Activated CD4-positive, alpha-beta memory T cell treated with anti-CD3 and anti-CD28 coated beads for 36 hours (primary cell): ENCODE measurements at regions of chr9 and their contacts with region 1.

Region 1: DNA sequence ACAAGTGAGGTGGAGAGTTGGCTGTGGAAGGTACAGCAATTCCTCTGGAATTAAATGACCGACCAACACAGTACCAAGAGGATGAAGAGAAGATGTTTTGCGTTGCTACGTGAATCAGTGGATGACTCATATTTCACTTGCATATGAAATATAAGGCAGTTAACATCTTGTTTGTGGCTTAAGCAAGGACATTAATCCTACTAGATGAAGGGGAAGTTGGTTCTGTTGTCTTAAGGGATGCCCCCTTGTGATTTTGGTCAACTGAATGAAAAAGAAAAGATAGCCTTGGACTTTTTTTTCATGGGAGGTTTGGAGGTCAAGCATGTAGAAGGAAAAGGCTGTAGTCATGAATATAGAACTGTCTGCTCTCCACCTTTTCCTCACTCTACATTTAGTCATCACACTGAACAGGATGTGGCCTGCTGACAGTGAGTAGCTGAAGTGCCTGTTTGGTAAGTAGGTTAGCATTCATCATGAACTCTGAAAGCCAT is 33.9 kb downstream of the VLDLR start:
- DNase-seq: peak; percentile 56
- H3K4me3 Mint-ChIP-seq: no peak overlapping the region
- H3K27ac Mint-ChIP-seq: peak overlapping the region; percentile 80
- H3K4me1 Mint-ChIP-seq: peaks cover 23% of the 10 kb centered on the region
- H3K27me3 Mint-ChIP-seq: no peaks in the 10 kb centered on the region

Region 2: GRCh38 chr9:2570615-2571479 is 84.6 kb before region 1 on chr9:
- CTCF ChIA-PET with region 1: no interaction called
- POLR2A ChIA-PET with region 1: no interaction called
- intact Hi-C with region 1: loop called (anchors 1 kb)
- DNase-seq: peak; percentile 63
- H3K4me3 Mint-ChIP-seq: no peak overlapping the region
- H3K27ac Mint-ChIP-seq: no peak overlapping the region
- H3K4me1 Mint-ChIP-seq: no peaks in the 10 kb centered on the region
- H3K27me3 Mint-ChIP-seq: peaks cover 8% of the 10 kb centered on the region

Region 3: GRCh38 chr9:2608276-2608675 is 47.2 kb before region 1 on chr9:
- CTCF ChIA-PET with region 1: no interaction called
- POLR2A ChIA-PET with region 1: no interaction called
- intact Hi-C with region 1: loop called (anchors 5 kb)
- DNase-seq: no peak
- H3K4me3 Mint-ChIP-seq: no peak overlapping the region
- H3K27ac Mint-ChIP-seq: no peak overlapping the region
- H3K4me1 Mint-ChIP-seq: no peaks in the 10 kb centered on the region
- H3K27me3 Mint-ChIP-seq: peaks cover 15% of the 10 kb centered on the region

Region 4: DNA sequence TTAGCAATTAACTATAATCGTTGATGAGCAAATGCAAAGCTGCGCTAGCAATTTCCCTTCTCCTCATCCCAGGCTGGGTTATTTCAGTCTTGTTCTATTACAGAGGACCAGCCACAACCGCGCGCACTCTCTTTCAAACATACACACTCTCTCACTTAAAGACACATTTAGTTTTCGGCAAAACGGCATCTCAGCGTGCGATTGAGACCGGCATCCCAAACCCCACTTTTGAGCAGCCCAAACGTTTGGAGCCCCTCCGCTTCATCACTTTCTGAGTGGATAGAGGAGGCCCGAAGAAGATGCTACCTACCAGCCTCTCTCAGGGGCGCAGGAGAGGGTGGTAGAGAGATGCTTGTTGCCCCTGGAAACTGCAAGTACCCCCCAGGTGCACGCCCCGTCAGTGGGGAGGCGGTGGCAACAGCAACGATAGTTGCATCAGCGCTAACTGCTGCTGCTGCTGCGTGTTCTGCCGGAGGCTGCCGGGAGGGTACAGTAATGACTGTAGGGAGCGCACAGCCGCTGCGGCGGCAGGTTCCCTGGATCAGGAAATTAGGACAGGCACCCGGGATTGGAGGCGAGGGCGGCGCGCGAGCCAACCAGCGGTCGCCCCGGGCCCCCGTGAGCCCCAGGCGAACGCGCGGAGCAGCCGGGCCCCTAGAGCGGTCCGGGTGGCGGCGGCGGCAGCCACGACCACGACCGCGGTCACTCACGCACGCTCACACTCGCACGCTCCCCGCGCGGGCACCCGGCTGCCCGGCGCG is 34.4 kb before region 1 on chr9:
- CTCF ChIA-PET with region 1: no interaction called
- POLR2A ChIA-PET with region 1: no interaction called
- intact Hi-C with region 1: loop called (anchors 1 kb)
- DNase-seq: peak; percentile 86
- H3K4me3 Mint-ChIP-seq: peak overlapping the region; percentile 75
- H3K27ac Mint-ChIP-seq: peak overlapping the region; percentile 28
- H3K4me1 Mint-ChIP-seq: peaks cover 14% of the 10 kb centered on the region
- H3K27me3 Mint-ChIP-seq: peaks cover 49% of the 10 kb centered on the region

Region 5: DNA sequence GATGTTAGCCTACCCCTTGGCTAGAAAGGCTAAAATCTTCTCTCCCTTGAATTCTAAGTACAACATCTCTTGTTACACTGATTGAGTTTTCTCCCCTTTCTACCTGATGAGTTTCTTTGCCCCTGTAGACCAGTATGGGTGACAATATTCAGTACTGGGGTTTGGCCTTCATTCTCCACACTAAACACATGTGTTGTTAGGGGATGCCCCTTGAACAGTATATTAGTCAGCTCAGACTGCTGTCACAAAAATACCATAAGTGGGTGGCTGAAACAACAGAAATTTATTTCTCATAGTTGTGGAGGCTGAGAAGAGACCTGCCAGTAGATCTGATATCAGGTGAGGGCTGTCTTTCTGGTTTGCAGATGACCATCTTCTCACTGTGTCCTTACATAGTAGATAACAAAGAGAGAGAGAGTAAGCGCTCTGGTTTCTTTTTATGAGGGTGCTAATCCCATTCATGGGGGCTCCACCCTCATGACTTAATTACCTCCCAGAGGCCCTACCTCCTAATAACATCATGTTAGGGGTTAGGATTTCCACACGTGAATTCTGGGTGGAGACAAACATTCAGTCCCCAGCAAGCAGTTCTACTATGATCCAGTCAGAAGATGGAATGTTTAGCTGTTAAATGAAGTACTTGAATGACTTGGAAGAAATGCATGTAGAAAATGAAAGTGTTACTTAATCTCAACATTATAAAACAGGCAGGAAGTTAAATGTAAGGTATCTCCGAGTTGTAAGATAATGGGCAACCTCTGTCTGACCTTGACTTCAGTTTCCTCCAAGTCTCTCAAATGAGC is 16.4 kb before region 1 on chr9:
- CTCF ChIA-PET with region 1: no interaction called
- POLR2A ChIA-PET with region 1: no interaction called
- intact Hi-C with region 1: loop called (anchors 1 kb)
- DNase-seq: no peak
- H3K4me3 Mint-ChIP-seq: no peak overlapping the region
- H3K27ac Mint-ChIP-seq: peak overlapping the region; percentile 26
- H3K4me1 Mint-ChIP-seq: peaks cover 13% of the 10 kb centered on the region
- H3K27me3 Mint-ChIP-seq: peaks cover 1% of the 10 kb centered on the region

Region 6: DNA sequence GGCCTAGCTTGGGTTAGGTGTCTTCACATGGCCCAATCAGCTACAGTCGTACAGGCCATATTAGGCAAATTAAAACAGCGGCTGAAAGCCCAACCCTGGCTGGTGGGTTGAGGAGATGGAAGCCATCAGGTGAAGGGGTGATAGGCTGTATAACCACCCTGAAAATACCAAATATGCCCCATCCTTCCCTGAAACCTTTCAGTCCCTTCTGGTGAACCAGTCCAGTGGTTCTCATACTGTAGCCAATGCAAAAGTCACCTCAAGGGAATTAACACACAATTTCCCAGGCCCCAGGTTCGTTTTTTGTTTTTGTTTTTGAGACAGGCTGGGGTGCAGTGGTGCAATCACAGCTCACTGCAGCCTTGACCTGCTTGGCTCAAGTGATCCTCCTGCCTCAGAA is 42.0 kb after region 1 on chr9:
- CTCF ChIA-PET with region 1: no interaction called
- POLR2A ChIA-PET with region 1: no interaction called
- intact Hi-C with region 1: no loop called
- DNase-seq: no peak
- H3K4me3 Mint-ChIP-seq: no peak overlapping the region
- H3K27ac Mint-ChIP-seq: no peak overlapping the region
- H3K4me1 Mint-ChIP-seq: no peaks in the 10 kb centered on the region
- H3K27me3 Mint-ChIP-seq: no peaks in the 10 kb centered on the region

Region 7: DNA sequence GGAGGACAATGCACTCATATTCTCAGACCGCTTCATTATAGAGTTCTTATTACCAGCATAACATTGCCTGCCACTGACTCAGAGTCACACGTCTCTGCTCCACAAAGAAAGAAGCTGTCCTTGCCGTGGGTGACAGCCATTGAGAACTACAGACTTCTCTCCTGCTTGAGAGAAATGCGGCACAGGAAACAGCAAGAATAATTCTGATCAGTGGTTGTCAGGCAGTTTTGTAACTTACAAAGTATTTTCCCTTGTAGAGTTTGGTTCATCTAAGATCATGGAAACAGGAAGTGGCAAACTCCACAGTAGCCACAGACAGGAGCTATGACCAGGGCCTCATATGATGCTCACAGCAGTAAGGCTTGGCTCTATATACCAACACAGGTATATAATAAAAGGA is 108.9 kb after region 1 on chr9:
- CTCF ChIA-PET with region 1: no interaction called
- POLR2A ChIA-PET with region 1: no interaction called
- intact Hi-C with region 1: loop called (anchors 1 kb)
- DNase-seq: peak; percentile 33
- H3K4me3 Mint-ChIP-seq: no peak overlapping the region
- H3K27ac Mint-ChIP-seq: peak overlapping the region; percentile 81
- H3K4me1 Mint-ChIP-seq: peaks cover 23% of the 10 kb centered on the region
- H3K27me3 Mint-ChIP-seq: no peaks in the 10 kb centered on the region

Region 8: GRCh38 chr9:2837915-2838314 is 182.5 kb after region 1 on chr9:
- CTCF ChIA-PET with region 1: no interaction called
- POLR2A ChIA-PET with region 1: no interaction called
- intact Hi-C with region 1: loop called (anchors 1 kb)
- DNase-seq: no peak
- H3K4me3 Mint-ChIP-seq: no peak overlapping the region
- H3K27ac Mint-ChIP-seq: no peak overlapping the region
- H3K4me1 Mint-ChIP-seq: peaks cover 34% of the 10 kb centered on the region
- H3K27me3 Mint-ChIP-seq: no peaks in the 10 kb centered on the region